Activated naive CD4-positive, alpha-beta T cell treated with anti-CD3 and anti-CD28 coated beads for 36 hours (primary cell): ENCODE measurements at regions of chr9 and their contacts with region 1.

Region 1: GRCh38 chr9:108885643-108886348 is 23.7 kb downstream of the ACTL7A start:
- DNase-seq: peak; percentile 86
- H3K4me3 Mint-ChIP-seq: peak overlapping the region; percentile 2
- H3K27ac Mint-ChIP-seq: peak overlapping the region; percentile 77
- H3K4me1 Mint-ChIP-seq: peaks cover 19% of the 10 kb centered on the region
- H3K27me3 Mint-ChIP-seq: no peaks in the 10 kb centered on the region

Region 2: DNA sequence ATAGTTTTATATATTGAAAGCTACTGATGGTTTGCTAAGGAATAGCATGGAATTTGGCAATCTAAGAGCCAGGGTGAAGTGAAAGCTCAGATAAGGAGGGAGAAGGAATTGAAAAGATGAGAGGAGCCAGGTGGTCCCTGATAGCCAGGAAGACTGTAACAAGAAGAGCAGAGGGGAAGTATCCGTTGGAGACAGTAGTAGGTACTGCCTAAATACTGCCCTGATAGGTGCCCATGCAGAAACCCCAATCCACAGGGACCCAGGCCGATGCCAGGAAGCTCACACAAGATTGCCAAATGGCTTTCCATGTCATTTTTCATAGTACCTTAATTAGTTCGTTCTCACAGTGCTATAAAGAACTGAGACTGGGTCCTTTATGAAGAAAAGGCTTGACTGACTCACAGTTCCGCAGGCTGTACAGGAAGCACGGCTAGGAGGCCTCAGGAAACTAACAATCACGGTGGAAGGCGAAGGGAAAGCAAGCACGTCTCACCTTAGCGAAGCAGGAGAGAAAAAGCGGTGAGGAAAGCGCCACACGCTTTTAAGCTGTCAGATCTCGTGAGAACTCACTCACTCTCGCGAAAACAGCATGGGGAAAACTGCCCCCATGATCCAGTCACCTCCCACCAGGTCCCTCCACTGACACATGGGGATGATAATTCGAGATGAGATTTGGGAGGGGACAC is 43.0 kb before region 1 on chr9:
- CTCF ChIA-PET with region 1: no interaction called
- intact Hi-C with region 1: loop called (anchors 2 kb)
- DNase-seq: peak; percentile 69
- H3K4me3 Mint-ChIP-seq: peak overlapping the region; percentile 64
- H3K27ac Mint-ChIP-seq: peak overlapping the region; percentile 50
- H3K4me1 Mint-ChIP-seq: peaks cover 21% of the 10 kb centered on the region
- H3K27me3 Mint-ChIP-seq: no peaks in the 10 kb centered on the region

Region 3: GRCh38 chr9:108933718-108934322 is 48.0 kb after region 1 on chr9 and contains the start of gene ELP1:
- CTCF ChIA-PET with region 1: no interaction called
- intact Hi-C with region 1: loop called (anchors 1 kb)
- DNase-seq: peak; percentile 94
- H3K4me3 Mint-ChIP-seq: peak within 1 kb of the TSS; percentile 95
- H3K27ac Mint-ChIP-seq: peak within 1 kb of the TSS; percentile 92
- H3K4me1 Mint-ChIP-seq: peaks cover 27% of the 10 kb centered on the region
- H3K27me3 Mint-ChIP-seq: no peaks in the 10 kb centered on the region
- total RNA-seq, gene ELP1: 22.3 to 27.3 TPM

Region 4: DNA sequence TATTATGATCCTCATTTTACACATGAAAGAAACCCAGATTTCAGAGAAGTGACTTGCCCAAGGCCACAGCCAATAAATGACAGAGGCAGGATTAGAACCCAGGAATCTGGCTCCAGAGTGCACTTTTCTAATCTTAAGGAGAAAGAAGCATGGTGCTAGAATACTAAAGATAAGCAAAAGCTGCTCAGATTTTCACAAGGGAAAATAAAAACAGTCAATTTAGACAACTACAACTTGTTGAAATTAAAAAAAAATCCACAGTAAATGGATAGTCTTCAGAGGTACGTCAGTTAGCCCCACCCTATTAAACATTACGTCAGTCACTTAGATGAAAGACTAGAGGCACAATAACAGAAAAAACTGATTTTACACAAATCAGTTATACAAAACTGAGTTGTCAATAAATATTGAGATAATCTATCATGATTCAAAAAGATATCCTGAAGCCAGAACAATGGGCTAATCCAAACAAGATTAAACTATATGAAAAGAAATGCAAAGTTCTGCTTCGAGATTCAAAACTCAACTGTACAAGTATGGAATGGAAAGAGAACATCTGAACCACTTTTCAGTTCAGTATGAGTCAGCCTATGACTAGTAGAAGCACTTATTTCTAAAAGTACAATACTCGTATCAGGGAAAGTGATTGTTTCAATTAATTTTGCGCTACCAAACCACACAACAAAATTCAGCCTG is 224.7 kb after region 1 on chr9:
- CTCF ChIA-PET with region 1: no interaction called
- intact Hi-C with region 1: loop called (anchors 1 kb)
- DNase-seq: no peak
- H3K4me3 Mint-ChIP-seq: peak overlapping the region; percentile 44
- H3K27ac Mint-ChIP-seq: peak overlapping the region; percentile 75
- H3K4me1 Mint-ChIP-seq: peaks cover 82% of the 10 kb centered on the region
- H3K27me3 Mint-ChIP-seq: no peaks in the 10 kb centered on the region

Region 5: DNA sequence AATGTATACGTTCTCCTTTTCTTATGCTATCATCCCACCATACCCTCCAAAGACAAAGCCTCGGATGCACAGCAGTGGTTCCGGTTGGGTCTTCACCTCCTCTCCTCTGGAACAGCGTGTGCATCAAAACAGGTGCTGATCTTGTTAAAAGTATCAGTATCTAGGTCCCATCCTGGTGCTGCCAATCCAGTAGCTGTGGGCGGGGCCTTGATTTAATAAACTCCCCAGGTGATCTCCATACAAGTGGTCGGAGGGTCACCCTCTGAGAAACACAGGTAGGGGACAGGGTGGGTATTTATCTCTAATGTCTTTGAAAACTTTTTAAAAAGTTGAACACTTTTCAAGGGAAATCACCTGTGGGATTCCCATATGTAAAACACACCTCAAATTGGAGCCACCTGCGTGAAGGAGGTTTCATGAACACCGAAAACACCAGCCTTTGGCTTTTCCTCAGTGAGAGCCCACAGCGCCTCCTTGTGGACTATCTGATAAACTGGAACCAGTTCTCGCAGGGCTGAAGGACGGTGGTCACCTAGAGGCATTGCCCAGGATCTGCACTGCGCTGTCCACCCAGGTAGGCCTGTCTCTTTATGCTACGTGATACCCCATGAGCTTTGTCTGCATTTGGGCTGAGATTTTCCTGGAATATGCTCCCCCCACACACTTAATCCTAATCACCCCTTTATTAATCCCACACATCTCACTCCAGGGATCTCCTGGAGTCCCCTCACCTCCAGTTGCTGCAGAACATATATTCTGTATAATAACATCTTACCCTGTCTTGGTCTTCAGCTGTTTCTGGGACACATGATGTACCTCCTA is 515.6 kb after region 1 on chr9:
- CTCF ChIA-PET with region 1: no interaction called
- intact Hi-C with region 1: loop called (anchors 1 kb)
- DNase-seq: peak; percentile 75
- H3K4me3 Mint-ChIP-seq: no peak overlapping the region
- H3K27ac Mint-ChIP-seq: no peak overlapping the region
- H3K4me1 Mint-ChIP-seq: peaks cover 8% of the 10 kb centered on the region
- H3K27me3 Mint-ChIP-seq: peaks cover 20% of the 10 kb centered on the region